CD4-positive, alpha-beta T cell (primary cell): ENCODE measurements at regions of chr16 and their contacts with region 1.

Region 1: GRCh38 chr16:27179500-27180072 is 23.7 kb upstream of the KDM8 start:
- DNase-seq: peak; percentile 83 to 95 (median 86)
- ATAC-seq: peak; percentile 99
- H3K4me3 ChIP-seq: no peak overlapping the region
- H3K4me3 Mint-ChIP-seq: no peak overlapping the region
- H3K27ac ChIP-seq: no peak overlapping the region
- H3K27ac Mint-ChIP-seq: peak overlapping the region; percentile 72
- H3K4me1 ChIP-seq: peaks cover 35% of the 10 kb centered on the region
- H3K4me1 Mint-ChIP-seq: peaks cover 55% of the 10 kb centered on the region
- H3K27me3 ChIP-seq: no peaks in the 10 kb centered on the region
- H3K27me3 Mint-ChIP-seq: no peaks in the 10 kb centered on the region
- CTCF ChIP-seq: peak; percentile 84

Region 2: DNA sequence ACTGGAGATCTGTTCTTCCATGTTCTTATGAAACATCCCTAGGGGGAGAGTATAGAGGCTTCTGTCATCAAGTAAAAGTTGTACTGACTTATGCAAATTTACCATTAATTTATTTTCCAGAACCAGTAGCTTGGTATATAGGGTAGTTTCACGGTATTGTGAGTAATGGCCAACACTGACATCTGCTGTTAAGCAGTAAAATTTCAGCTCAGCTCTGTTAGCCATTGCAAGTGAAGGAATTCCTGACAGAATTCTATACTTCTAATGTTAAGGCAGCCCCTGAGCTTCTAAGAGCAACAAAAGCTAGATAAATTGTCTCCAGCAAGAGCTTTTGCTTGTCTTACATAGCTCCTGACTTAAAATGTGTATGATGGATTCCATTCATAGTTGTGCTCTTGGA is 726.4 kb before region 1 on chr16:
- CTCF ChIA-PET with region 1: no interaction called
- POLR2A ChIA-PET with region 1: no interaction called
- intact Hi-C with region 1: no loop called
- DNase-seq: no peak
- ATAC-seq: no peak
- H3K4me3 ChIP-seq: no peak overlapping the region
- H3K4me3 Mint-ChIP-seq: no peak overlapping the region
- H3K27ac ChIP-seq: no peak overlapping the region
- H3K27ac Mint-ChIP-seq: no peak overlapping the region
- H3K4me1 ChIP-seq: no peaks in the 10 kb centered on the region
- H3K4me1 Mint-ChIP-seq: no peaks in the 10 kb centered on the region
- H3K27me3 ChIP-seq: no peaks in the 10 kb centered on the region
- H3K27me3 Mint-ChIP-seq: peaks cover 16% of the 10 kb centered on the region
- CTCF ChIP-seq: no peak

Region 3: GRCh38 chr16:27109666-27110523 is 69.7 kb before region 1 on chr16:
- CTCF ChIA-PET with region 1: no interaction called
- POLR2A ChIA-PET with region 1: no interaction called
- intact Hi-C with region 1: no loop called
- DNase-seq: peak; percentile 53 to 85 (median 74)
- ATAC-seq: peak; percentile 96
- H3K4me3 ChIP-seq: peak overlapping the region; percentile 41
- H3K4me3 Mint-ChIP-seq: peak overlapping the region; percentile 54
- H3K27ac ChIP-seq: no peak overlapping the region
- H3K27ac Mint-ChIP-seq: no peak overlapping the region
- H3K4me1 ChIP-seq: peaks cover 19% of the 10 kb centered on the region
- H3K4me1 Mint-ChIP-seq: no peaks in the 10 kb centered on the region
- H3K27me3 ChIP-seq: no peaks in the 10 kb centered on the region
- H3K27me3 Mint-ChIP-seq: no peaks in the 10 kb centered on the region
- CTCF ChIP-seq: peak; percentile 78

Region 4: DNA sequence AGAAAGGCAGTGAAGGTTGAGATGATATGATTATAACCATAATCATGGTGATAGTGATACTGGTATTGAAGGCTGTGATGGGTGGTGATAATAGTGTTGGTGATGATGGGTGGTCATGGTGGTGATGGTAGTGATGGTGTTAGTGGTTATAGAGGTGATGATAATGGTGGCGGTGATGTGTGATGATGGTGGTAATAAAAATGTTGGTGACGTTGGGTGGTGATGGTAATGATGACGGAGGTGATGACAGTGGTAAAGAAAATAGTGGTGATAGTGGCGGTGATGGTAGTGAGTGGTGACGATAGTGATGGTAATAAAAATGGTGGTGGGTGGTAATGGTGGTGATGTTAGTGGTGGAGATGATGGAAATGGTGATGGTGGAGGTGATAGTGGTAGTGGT is 41.3 kb before region 1 on chr16:
- CTCF ChIA-PET with region 1: no interaction called
- POLR2A ChIA-PET with region 1: no interaction called
- intact Hi-C with region 1: no loop called
- DNase-seq: no peak
- ATAC-seq: no peak
- H3K4me3 ChIP-seq: no peak overlapping the region
- H3K4me3 Mint-ChIP-seq: no peak overlapping the region
- H3K27ac ChIP-seq: no peak overlapping the region
- H3K27ac Mint-ChIP-seq: no peak overlapping the region
- H3K4me1 ChIP-seq: no peaks in the 10 kb centered on the region
- H3K4me1 Mint-ChIP-seq: no peaks in the 10 kb centered on the region
- H3K27me3 ChIP-seq: peaks cover 0 to 3% of the 10 kb centered on the region in 2 experiments
- H3K27me3 Mint-ChIP-seq: peaks cover 4% of the 10 kb centered on the region
- CTCF ChIP-seq: no peak

Region 5: GRCh38 chr16:27203429-27204231 is 24.0 kb after region 1 on chr16 and contains the start of gene KDM8:
- CTCF ChIA-PET with region 1: interaction called, 51 read pairs
- POLR2A ChIA-PET with region 1: interaction called, 31 read pairs
- intact Hi-C with region 1: loop called in 1 of 2 experiments (anchors 1 kb)
- DNase-seq: peak; percentile 98 to 100 (median 100)
- ATAC-seq: peak; percentile 86
- H3K4me3 ChIP-seq: peak within 1 kb of the TSS; percentile 95
- H3K4me3 Mint-ChIP-seq: peak within 1 kb of the TSS; percentile 97
- H3K27ac ChIP-seq: peak within 1 kb of the TSS; percentile 93 to 97
- H3K27ac Mint-ChIP-seq: peak within 1 kb of the TSS; percentile 96
- H3K4me1 ChIP-seq: peaks cover 49% of the 10 kb centered on the region
- H3K4me1 Mint-ChIP-seq: peaks cover 60% of the 10 kb centered on the region
- H3K27me3 ChIP-seq: no peaks in the 10 kb centered on the region
- H3K27me3 Mint-ChIP-seq: no peaks in the 10 kb centered on the region
- CTCF ChIP-seq: no peak
- total RNA-seq, gene KDM8: 15.1 to 17.3 TPM

Region 6: DNA sequence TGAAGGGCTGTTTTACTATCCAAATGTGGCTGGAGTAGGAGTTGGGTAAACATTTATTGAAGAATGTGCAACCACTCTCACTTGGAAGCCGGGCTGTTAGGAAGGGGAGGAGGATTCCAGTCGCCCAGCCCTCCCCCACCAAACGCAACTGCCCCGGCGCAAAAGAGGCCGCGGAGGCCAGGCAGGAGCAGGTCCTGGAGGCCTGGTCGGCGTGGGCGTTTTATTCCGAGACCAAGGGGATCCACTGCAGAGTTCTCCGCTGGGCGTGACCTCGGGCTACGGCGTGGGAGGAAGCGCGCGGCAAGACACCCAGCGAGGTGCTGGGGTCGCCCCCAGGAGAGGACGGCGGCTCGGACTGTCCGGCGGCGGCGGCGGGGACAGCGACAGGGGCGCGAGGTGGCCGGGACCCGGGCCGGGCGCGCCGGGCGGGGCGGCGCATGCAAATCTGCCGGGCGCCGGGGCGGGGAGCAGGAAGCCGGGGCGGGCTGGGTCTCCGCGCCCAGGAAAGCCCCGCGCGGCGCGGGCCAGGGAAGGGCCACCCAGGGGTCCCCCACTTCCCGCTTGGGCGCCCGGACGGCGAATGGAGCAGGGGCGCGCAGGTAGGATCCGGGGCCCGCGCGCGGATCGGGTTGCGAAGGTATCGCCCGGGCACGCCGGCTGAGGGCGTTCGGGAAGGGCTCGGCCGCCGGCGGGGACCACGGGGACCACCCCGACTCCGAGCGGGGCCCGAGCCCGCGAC is 134.0 kb after region 1 on chr16 and contains the start of gene IL4R:
- CTCF ChIA-PET with region 1: interaction called, 10 read pairs
- POLR2A ChIA-PET with region 1: no interaction called
- intact Hi-C with region 1: loop called (anchors 2 to 5 kb)
- DNase-seq: peak; percentile 33 to 84 (median 56)
- ATAC-seq: peak; percentile 46
- H3K4me3 ChIP-seq: peak within 1 kb of the TSS; percentile 91
- H3K4me3 Mint-ChIP-seq: peak within 1 kb of the TSS; percentile 95
- H3K27ac ChIP-seq: peak within 1 kb of the TSS; percentile 89 to 94
- H3K27ac Mint-ChIP-seq: peak within 1 kb of the TSS; percentile 92
- H3K4me1 ChIP-seq: peaks cover 56% of the 10 kb centered on the region
- H3K4me1 Mint-ChIP-seq: peaks cover 47% of the 10 kb centered on the region
- H3K27me3 ChIP-seq: no peaks in the 10 kb centered on the region
- H3K27me3 Mint-ChIP-seq: no peaks in the 10 kb centered on the region
- CTCF ChIP-seq: no peak
- total RNA-seq, gene IL4R: 145 to 147 TPM

Region 7: DNA sequence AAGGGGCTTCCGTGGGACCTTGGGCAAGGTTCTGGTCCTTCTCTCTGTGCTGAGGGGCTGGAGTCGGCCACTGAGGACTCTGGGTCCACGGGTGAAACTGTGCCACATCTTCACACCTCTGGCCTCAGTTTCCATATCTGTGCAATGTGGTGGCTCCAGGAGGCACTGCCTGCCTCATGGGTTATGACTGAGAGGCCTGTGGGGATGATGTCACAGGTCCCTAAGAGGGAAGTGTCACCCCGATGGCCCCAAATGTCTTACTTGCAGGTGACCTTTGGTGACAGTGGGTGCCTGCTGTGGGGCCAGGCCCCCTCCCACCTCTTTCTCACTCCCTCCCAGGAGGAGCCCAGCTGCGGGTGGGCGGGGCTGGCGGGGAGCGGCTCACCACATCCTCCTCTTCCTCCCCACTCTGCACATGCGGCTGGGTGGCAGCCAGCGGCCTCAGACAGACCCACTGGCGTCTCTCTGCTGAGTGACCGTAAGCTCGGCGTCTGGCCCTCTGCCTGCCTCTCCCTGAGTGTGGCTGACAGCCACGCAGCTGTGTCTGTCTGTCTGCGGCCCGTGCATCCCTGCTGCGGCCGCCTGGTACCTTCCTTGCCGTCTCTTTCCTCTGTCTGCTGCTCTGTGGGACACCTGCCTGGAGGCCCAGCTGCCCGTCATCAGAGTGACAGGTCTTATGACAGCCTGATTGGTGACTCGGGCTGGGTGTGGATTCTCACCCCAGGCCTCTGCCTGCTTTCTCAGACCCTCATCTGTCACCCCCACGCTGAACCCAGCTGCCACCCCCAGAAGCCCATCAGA is 222.4 kb after region 1 on chr16 and contains the start of gene IL21R:
- CTCF ChIA-PET with region 1: interaction called, 12 read pairs
- POLR2A ChIA-PET with region 1: interaction called, 7 read pairs
- intact Hi-C with region 1: no loop called
- DNase-seq: peak; percentile 76 to 95 (median 86)
- ATAC-seq: peak; percentile 81
- H3K4me3 ChIP-seq: peak within 1 kb of the TSS; percentile 99
- H3K4me3 Mint-ChIP-seq: peak within 1 kb of the TSS; percentile 98
- H3K27ac ChIP-seq: peak within 1 kb of the TSS; percentile 81 to 94
- H3K27ac Mint-ChIP-seq: peak within 1 kb of the TSS; percentile 90
- H3K4me1 ChIP-seq: peaks cover 63% of the 10 kb centered on the region
- H3K4me1 Mint-ChIP-seq: peaks cover 79% of the 10 kb centered on the region
- H3K27me3 ChIP-seq: no peaks in the 10 kb centered on the region
- H3K27me3 Mint-ChIP-seq: no peaks in the 10 kb centered on the region
- CTCF ChIP-seq: no peak
- total RNA-seq, gene IL21R: 34.5 to 34.8 TPM

Region 8: DNA sequence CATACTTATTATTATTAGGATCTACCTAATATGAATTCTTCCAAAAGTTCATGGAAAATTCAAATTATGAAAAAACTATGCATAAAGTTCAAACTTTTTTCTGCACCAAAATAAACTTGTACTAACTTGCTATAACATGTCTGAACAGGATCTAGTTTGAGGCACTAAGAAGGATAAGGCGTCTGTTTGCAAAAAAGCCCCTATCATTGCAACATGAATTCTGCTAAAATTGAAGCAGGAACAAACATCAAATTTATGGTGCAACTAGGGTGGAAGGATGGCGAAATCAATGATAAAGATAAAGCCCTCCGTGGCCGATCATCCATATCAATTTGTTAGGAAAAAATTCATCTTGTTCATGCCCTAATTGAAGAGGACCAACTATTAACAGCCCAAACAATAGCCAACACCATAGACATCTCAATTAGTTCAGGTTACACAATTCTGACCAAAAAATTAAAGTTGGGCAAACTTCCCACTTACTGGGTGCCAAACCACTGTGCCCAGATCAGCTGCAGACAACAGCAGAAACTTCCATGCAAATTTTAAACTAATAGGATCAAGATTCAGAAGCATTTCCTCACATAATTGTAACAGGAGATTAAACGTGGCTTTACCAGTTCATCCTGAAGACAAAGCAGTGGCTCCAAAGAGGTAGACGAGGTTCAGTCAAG is 235.3 kb after region 1 on chr16:
- CTCF ChIA-PET with region 1: no interaction called
- POLR2A ChIA-PET with region 1: no interaction called
- intact Hi-C with region 1: no loop called
- DNase-seq: no peak
- ATAC-seq: no peak
- H3K4me3 ChIP-seq: no peak overlapping the region
- H3K4me3 Mint-ChIP-seq: peak overlapping the region; percentile 8
- H3K27ac ChIP-seq: no peak overlapping the region
- H3K27ac Mint-ChIP-seq: peak overlapping the region; percentile 53
- H3K4me1 ChIP-seq: peaks cover 3% of the 10 kb centered on the region
- H3K4me1 Mint-ChIP-seq: peaks cover 63% of the 10 kb centered on the region
- H3K27me3 ChIP-seq: no peaks in the 10 kb centered on the region
- H3K27me3 Mint-ChIP-seq: no peaks in the 10 kb centered on the region
- CTCF ChIP-seq: no peak